Ovary (tissue), 10 donors: ENCODE measurements at regions of chr17 and their contacts with region 1.

Region 1: DNA sequence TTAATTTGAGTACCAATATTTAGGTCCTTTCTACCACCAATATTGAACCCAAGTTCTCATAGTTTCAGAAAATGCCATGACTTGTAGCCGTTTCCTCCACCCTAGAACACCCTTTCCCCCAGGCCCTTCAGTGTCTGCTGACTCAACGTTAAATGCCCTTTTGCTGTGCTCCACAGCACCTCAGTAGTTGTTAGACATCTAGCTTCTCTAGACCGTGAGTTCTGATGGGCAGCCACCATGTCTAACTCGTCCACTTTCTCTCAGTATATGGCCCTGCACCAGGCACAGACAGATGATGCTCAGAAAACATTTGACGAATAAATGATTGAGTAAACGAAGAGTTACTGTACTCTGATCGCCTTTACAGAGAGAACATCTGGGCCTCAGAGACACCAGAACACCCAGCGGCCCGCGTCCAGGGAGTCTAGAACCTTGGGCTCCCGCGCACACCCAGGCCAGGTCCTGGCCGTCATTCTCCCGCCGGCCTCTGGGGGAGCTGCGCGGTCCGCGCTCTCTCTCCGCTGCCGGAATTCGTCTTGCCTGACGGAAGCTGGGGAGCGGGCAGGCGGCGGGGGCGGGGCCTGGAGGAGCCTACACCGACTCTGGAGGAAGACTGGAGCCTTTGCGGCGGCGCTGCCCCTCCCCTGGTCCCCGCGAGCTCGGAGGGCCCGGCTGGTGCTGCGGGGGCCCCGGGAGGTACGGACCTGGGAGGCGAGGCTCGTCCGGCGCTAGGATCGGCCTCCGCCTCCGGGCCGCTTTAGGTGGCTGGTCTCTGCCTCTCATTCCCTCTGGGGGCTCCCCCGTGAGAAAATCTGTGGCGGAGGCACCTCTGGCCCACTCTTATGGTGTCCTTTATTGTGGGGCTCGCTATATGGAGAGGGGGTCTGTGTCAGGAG is at the start of gene NKIRAS2:
- DNase-seq: peak; percentile 89 to 94 (median 92)
- H3K4me3 ChIP-seq: peak within 1 kb of the TSS; percentile 99
- H3K27ac ChIP-seq: peak within 1 kb of the TSS; percentile 3 to 76
- H3K4me1 ChIP-seq: peaks cover 13% of the 10 kb centered on the region
- H3K27me3 ChIP-seq: no peaks in the 10 kb centered on the region
- CTCF ChIP-seq: peak; percentile 92 to 97 (median 92)
- EP300 ChIP-seq: no peak
- POLR2A ChIP-seq: peak; percentile 52
- total RNA-seq, gene NKIRAS2: 11.8 to 27.6 (median 22.2) TPM

Region 2: DNA sequence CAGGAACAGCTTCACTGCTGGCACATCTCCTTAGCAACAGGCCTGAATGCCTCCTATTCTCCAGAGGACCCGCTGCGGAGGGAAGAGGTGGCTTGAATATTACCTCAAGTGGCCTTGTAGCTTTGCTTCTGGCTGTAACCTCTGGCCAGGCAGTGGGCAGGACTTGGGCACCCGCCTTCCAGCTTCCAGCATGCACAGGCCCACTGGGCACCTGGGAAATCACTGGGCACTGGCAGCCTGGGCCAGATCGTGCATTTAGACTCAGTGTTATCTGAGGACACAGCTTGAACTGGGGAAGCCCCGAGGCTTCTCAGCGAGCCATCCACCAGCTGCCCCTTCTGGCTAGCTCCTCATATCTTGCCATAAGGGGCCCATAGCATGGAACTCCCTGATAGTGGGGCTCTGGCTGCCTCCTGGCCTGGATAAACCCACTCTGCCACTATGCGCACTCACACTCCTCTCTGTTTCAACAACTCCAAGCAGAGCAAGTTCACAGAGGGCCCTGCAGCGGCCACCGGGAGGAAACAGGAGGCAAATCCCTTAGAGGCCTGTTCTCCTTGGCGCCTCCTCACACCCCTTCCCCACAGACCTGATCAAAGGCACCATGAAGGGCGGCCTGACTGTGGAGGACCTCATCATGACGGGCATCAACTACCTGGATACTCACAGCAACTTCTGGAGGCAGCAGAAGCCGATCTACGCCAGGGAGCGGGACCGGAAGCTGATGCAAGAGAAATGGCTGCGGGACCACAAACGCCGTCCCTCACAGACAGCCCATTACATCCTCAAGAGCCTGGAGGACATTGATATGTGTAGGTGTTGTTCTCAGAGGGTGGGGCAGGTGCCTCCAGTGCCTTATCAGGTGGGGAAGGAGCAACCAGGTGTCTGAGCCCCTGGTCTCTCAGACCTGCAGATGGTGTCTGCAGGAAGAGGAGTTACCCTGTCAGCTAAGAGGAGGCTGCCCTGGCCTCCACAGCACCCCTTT is 81.5 kb before region 1 on chr17:
- intact Hi-C with region 1: no loop called
- DNase-seq: no peak
- H3K4me3 ChIP-seq: no peak overlapping the region
- H3K27ac ChIP-seq: no peak overlapping the region
- H3K4me1 ChIP-seq: no peaks in the 10 kb centered on the region
- H3K27me3 ChIP-seq: no peaks in the 10 kb centered on the region
- CTCF ChIP-seq: no peak
- EP300 ChIP-seq: no peak
- POLR2A ChIP-seq: no peak

Region 3: GRCh38 chr17:41966463-41967140 is 53.2 kb before region 1 on chr17 and contains the start of gene CNP:
- intact Hi-C with region 1: loop called in 1 of 4 experiments (anchors 5 kb)
- DNase-seq: peak; percentile 89 to 95 (median 91)
- H3K4me3 ChIP-seq: peak within 1 kb of the TSS; percentile 95
- H3K27ac ChIP-seq: peak within 1 kb of the TSS; percentile 64 to 70
- H3K4me1 ChIP-seq: peaks cover 7% of the 10 kb centered on the region
- H3K27me3 ChIP-seq: no peaks in the 10 kb centered on the region
- CTCF ChIP-seq: peak in 1 of 3 donors; percentile 29
- EP300 ChIP-seq: no peak
- POLR2A ChIP-seq: peak; percentile 40
- total RNA-seq, gene CNP: 30.5 to 88.9 (median 77.5) TPM

Region 4: GRCh38 chr17:42039794-42040763 is 20.3 kb after region 1 on chr17:
- intact Hi-C with region 1: no loop called
- DNase-seq: peak in 1 of 5 donors; percentile 41
- H3K4me3 ChIP-seq: no peak overlapping the region
- H3K27ac ChIP-seq: no peak overlapping the region
- H3K4me1 ChIP-seq: peaks cover 3% of the 10 kb centered on the region
- H3K27me3 ChIP-seq: no peaks in the 10 kb centered on the region
- CTCF ChIP-seq: no peak
- EP300 ChIP-seq: no peak
- POLR2A ChIP-seq: no peak